ENCODE measurements at regions of chr11 and their contacts with region 1.

Region 1: GRCh38 chr11:1572197-1573076 is at the start of gene DUSP8:
- DNase-seq: peak; percentile 81
- ATAC-seq: peak; percentile 8
- H3K4me3 Mint-ChIP-seq: peak within 1 kb of the TSS; percentile 36; the same call in 1 of the 2 replicates
- H3K27ac Mint-ChIP-seq: no peak within 1 kb of the TSS
- H3K4me1 Mint-ChIP-seq: peaks cover 13% of the 10 kb centered on the region
- H3K27me3 Mint-ChIP-seq: peaks cover 66% of the 10 kb centered on the region
- CTCF ChIP-seq: no peak
- total RNA-seq, gene DUSP8: 1.7 to 2.5 TPM (median 2.4 TPM) in 3 replicates

Region 2: DNA sequence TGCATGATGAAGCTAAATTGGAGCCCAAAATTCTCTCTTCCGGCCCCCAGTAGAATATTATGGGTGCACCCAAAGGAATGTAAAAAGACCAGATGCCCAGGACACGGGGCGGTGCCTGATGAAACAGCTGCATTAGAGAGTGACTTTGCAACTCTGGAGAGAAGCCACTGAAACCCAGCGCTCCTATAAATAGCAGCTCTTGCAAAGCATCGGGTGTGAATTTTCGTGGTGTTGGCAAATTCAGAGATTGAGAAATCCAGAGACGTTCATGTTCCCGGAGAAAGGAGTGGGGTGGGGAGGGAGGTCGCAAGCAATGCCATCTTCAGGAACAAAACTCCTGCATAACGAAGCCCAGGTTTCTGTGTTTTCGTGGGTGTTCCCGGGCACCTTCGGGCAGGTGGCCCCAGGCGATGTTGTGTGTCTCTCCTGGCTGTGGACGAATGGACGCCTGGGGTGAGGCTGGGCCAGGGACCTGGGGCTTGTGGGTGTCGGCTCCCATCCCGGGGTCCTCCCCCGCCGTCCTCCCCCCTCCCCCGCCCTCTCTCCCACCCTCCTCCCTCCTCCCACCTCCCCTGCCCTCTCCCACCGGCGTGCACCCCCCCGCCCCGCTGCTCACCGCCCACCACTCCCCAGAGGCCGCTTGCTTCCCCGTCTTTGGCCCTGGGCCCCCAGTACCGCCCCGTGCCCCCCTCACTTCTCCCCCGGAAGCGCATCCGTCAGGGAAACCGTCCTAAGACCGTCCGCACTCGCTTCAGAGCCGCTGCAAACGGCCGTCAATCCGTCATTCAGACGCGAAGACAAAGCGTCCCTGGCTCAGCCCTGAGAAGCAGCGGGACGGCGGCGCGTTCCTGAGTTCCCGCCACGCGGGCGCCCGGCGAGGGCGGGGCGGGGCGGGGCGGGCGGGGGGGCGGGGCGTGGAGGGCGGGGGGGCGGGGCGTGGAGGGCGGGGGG is 236.4 kb before region 1 on chr11:
- CTCF ChIA-PET with region 1: no interaction called
- POLR2A ChIA-PET with region 1: no interaction called
- DNase-seq: peak; percentile 71
- ATAC-seq: peak; percentile 64
- H3K4me3 Mint-ChIP-seq: peak overlapping the region; percentile 72
- H3K27ac Mint-ChIP-seq: no peak overlapping the region
- H3K4me1 Mint-ChIP-seq: peaks cover 7% of the 10 kb centered on the region
- H3K27me3 Mint-ChIP-seq: peaks cover 46% of the 10 kb centered on the region
- CTCF ChIP-seq: no peak

Region 3: GRCh38 chr11:1453611-1454034 is 118.8 kb before region 1 on chr11:
- CTCF ChIA-PET with region 1: interaction called, 12 read pairs
- POLR2A ChIA-PET with region 1: no interaction called
- DNase-seq: peak; percentile 89
- ATAC-seq: peak; percentile 95
- H3K4me3 Mint-ChIP-seq: no peak overlapping the region
- H3K27ac Mint-ChIP-seq: no peak overlapping the region
- H3K4me1 Mint-ChIP-seq: no peaks in the 10 kb centered on the region
- H3K27me3 Mint-ChIP-seq: no peaks in the 10 kb centered on the region
- CTCF ChIP-seq: 0 out of 2 replicates have a peak, but pooled peaks have one; percentile 44

Region 4: DNA sequence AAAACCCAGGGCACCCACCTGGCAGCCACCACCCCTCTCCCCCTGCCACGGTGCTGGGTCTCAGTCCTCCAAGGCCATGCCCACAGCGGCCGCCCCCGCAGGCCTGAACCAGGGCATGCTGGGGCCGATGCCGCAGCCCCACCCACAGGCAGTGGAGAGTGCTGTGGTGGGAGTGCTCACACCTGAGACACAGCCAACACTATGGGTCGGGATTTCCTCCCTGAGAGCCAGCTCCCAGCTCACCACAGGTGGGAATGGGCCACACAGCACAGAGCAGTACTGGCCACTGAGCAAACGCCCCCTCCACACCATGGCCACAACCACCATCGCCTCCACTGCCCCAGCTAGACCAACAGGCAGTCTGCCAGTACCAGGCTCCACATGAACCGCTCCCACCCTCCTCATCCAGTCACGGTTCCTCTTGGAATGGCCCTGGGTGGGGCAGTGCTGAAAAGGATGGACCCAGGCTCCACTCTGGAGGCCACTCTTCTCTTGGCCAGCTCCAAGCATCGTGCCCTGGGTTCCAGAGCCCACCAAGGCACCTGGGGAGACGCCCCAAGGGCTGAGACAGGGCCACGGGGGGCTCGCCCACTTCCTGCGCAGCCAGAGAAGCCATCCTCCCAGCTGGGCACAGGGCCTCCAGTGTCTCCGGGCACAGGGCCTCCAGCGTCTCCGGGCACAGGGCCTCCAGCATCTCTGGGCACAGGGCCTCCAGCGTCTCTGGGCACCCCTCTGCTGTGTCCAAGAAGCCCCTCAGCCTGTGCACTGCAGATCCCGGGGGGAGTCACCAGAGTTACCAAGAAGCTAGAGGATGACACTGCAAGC is 100.0 kb before region 1 on chr11:
- CTCF ChIA-PET with region 1: no interaction called
- POLR2A ChIA-PET with region 1: no interaction called
- DNase-seq: no peak
- ATAC-seq: no peak
- H3K4me3 Mint-ChIP-seq: no peak overlapping the region
- H3K27ac Mint-ChIP-seq: no peak overlapping the region
- H3K4me1 Mint-ChIP-seq: no peaks in the 10 kb centered on the region
- H3K27me3 Mint-ChIP-seq: no peaks in the 10 kb centered on the region; the same call in 1 of the 2 replicates
- CTCF ChIP-seq: no peak

Region 5: GRCh38 chr11:1505480-1505879 is 67.0 kb before region 1 on chr11:
- CTCF ChIA-PET with region 1: interaction called, 12 read pairs
- POLR2A ChIA-PET with region 1: no interaction called
- DNase-seq: peak; percentile 51
- ATAC-seq: peak; percentile 87
- H3K4me3 Mint-ChIP-seq: no peak overlapping the region
- H3K27ac Mint-ChIP-seq: no peak overlapping the region
- H3K4me1 Mint-ChIP-seq: peaks cover 8% of the 10 kb centered on the region
- H3K27me3 Mint-ChIP-seq: no peaks in the 10 kb centered on the region
- CTCF ChIP-seq: no peak

Region 6: DNA sequence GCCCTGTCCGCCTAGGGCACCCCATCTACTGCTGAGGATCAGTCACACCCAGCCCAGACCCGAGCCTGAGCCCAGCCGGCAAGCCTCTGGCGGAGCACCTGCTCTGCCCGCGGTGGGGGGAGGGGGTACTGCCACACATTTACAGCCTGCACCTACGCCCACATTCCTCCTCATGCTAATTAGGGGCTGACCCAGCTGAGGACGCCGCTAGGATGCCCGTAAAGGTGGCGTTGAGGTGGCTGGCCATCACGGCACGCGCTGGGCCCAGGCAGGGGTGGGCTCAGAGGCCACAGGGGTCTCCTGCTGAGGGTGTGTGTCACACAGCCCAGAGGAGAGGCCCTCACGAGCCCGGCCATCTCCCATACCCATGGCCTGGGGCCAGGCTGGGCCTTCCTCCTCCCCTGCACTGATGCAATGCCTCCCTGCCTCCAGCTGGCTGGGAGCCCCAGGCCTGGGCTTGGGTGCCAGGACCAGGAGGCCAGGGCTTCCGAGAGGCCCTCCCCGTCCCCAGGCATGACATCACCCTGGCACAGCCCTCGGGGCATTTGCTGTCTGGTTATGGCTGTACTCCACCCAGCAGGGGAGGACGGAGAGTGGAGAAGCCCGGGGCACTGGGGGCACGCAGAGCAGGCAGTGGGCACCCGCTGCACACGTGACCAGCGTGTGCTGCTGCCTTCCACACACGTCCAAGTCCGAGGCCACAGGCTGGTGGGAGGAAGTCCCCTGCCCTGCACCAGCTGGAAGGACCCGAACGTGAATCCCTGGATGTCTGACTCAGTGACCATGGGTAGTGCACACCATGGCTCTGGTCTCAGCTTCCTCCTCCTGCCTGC is 13.1 kb before region 1 on chr11:
- CTCF ChIA-PET with region 1: interaction called, 167 read pairs
- POLR2A ChIA-PET with region 1: interaction called, 16 read pairs
- DNase-seq: peak; percentile 75
- ATAC-seq: peak; percentile 41
- H3K4me3 Mint-ChIP-seq: no peak overlapping the region
- H3K27ac Mint-ChIP-seq: no peak overlapping the region
- H3K4me1 Mint-ChIP-seq: peaks cover 20% of the 10 kb centered on the region
- H3K27me3 Mint-ChIP-seq: peaks cover 56% of the 10 kb centered on the region
- CTCF ChIP-seq: no peak

Region 7: GRCh38 chr11:1586699-1587098 is 14.3 kb after region 1 on chr11:
- CTCF ChIA-PET with region 1: interaction called, 14 read pairs
- POLR2A ChIA-PET with region 1: no interaction called
- DNase-seq: no peak
- ATAC-seq: no peak
- H3K4me3 Mint-ChIP-seq: no peak overlapping the region
- H3K27ac Mint-ChIP-seq: no peak overlapping the region
- H3K4me1 Mint-ChIP-seq: peaks cover 4% of the 10 kb centered on the region
- H3K27me3 Mint-ChIP-seq: peaks cover 30% of the 10 kb centered on the region
- CTCF ChIP-seq: no peak

Region 8: GRCh38 chr11:1628506-1629325 is 56.3 kb after region 1 on chr11:
- CTCF ChIA-PET with region 1: interaction called, 21 read pairs
- POLR2A ChIA-PET with region 1: interaction called, 3 read pairs
- DNase-seq: peak; percentile 80
- ATAC-seq: peak; percentile 97
- H3K4me3 Mint-ChIP-seq: no peak overlapping the region
- H3K27ac Mint-ChIP-seq: no peak overlapping the region
- H3K4me1 Mint-ChIP-seq: peaks cover 16% of the 10 kb centered on the region
- H3K27me3 Mint-ChIP-seq: peaks cover 41% of the 10 kb centered on the region
- CTCF ChIP-seq: peak; percentile 91

Region 9: DNA sequence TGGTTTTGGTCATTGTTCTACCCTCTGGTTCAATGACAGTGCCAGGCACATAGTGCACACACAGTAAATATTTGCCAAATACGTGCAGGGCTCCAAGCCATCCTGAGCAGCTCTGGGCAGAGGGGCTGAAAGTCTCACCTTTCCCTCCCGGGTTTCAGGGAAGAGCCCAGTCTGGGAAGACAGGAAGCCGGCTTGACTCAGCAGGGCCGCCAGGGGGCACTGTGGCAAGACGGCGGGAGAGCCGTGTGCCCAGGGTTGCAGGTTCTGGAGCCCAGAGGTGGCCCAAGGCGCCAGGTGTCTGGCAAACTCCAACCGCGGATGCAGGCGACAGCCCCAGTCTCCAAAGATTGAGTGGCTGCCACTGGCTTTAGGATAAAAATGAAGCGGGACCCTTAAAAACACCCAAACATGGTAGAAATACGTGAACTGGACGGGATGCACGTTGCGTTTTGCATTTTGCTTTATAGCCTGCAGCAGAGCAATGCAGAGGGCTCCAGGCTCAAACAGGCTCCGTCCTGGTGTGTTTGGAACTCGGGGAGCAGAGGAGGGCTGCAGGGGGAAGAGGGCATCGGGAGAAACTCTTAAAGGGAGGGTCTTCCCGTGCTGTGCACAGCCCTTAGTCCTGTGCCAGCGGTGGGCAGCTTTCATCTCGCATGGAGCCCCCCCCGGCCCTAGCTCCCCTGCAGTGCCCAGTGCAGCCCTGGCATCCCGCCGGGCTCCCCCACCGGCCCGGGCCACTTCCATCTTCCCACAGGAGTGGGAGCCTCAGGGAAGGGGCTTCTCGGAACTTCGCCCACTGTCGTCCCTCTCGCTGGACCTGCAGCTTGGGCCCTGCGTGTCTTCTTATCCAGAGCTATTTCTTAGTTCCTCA is 67.9 kb after region 1 on chr11:
- CTCF ChIA-PET with region 1: interaction called, 12 read pairs
- POLR2A ChIA-PET with region 1: no interaction called
- DNase-seq: peak; percentile 74
- ATAC-seq: peak; percentile 94
- H3K4me3 Mint-ChIP-seq: no peak overlapping the region
- H3K27ac Mint-ChIP-seq: no peak overlapping the region
- H3K4me1 Mint-ChIP-seq: peaks cover 3% of the 10 kb centered on the region
- H3K27me3 Mint-ChIP-seq: peaks cover 4% of the 10 kb centered on the region
- CTCF ChIP-seq: peak; percentile 83